CD14-positive monocyte (primary cell): ENCODE measurements at regions of chr18 and their contacts with region 1.

Region 1: DNA sequence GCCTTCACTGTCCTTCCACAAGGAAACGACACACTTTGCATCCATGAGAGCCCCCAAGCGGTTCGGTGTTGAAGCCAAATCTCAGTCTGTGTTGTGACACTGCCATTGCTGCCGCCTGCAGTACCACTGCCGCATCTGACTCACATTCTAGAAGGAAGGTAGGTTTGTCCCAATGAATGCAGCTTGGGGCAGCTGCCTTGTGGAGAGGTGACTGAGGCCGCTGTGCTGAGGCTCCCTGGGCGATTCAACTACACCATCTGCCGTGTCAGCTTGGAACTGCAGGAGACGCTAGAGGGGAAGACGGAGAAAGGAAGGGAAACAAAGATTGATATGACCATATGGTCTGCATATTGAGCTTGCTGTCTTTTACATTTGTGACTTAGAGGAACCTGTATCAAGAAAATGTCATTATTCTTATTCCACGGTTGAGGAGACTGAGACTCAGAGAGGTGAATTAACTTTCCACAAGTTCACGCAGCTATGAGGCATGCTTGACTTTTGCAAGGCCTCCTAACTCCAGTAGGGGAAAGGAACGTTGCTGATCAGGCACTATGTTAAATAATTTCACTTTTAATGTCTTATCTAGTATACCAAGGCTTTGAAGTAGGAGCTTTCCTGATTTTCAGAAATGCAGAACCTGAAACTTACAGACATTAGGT is 43.5 kb upstream of the LMAN1 start:
- DNase-seq: peak; percentile 34 to 66 (median 36)
- H3K4me3 ChIP-seq: no peak overlapping the region
- H3K4me3 Mint-ChIP-seq: no peak overlapping the region
- H3K27ac ChIP-seq: no peak overlapping the region
- H3K27ac Mint-ChIP-seq: no peak overlapping the region
- H3K4me1 ChIP-seq: no peaks in the 10 kb centered on the region
- H3K4me1 Mint-ChIP-seq: peaks cover 3% of the 10 kb centered on the region
- H3K27me3 ChIP-seq: peaks cover 0 to 2% of the 10 kb centered on the region in 2 donors
- H3K27me3 Mint-ChIP-seq: peaks cover 5 to 10% (median 5%) of the 10 kb centered on the region in 3 donors
- CTCF ChIP-seq: peak; percentile 90

Region 2: GRCh38 chr18:59249205-59249774 is 153.3 kb before region 1 on chr18:
- intact Hi-C with region 1: loop called in 1 of 2 experiments (anchors 5 kb)
- DNase-seq: no peak
- H3K4me3 ChIP-seq: no peak overlapping the region
- H3K4me3 Mint-ChIP-seq: no peak overlapping the region
- H3K27ac ChIP-seq: no peak overlapping the region
- H3K27ac Mint-ChIP-seq: no peak overlapping the region
- H3K4me1 ChIP-seq: no peaks in the 10 kb centered on the region
- H3K4me1 Mint-ChIP-seq: no peaks in the 10 kb centered on the region
- H3K27me3 ChIP-seq: peaks cover 6 to 8% of the 10 kb centered on the region in 2 donors
- H3K27me3 Mint-ChIP-seq: peaks cover 17 to 35% (median 19%) of the 10 kb centered on the region in 3 donors
- CTCF ChIP-seq: peak; percentile 34

Region 3: GRCh38 chr18:59308248-59308937 is 94.2 kb before region 1 on chr18:
- intact Hi-C with region 1: loop called (anchors 5 kb)
- DNase-seq: peak; percentile 20 to 47 (median 36)
- H3K4me3 ChIP-seq: peak overlapping the region in 1 of 3 experiments; percentile 66
- H3K4me3 Mint-ChIP-seq: peak overlapping the region; percentile 62 to 81
- H3K27ac ChIP-seq: no peak overlapping the region
- H3K27ac Mint-ChIP-seq: no peak overlapping the region
- H3K4me1 ChIP-seq: peaks cover 0 to 3% of the 10 kb centered on the region in 2 donors
- H3K4me1 Mint-ChIP-seq: peaks cover 5% of the 10 kb centered on the region
- H3K27me3 ChIP-seq: peaks cover 12 to 30% of the 10 kb centered on the region in 2 donors
- H3K27me3 Mint-ChIP-seq: peaks cover 25 to 39% (median 26%) of the 10 kb centered on the region in 3 donors
- CTCF ChIP-seq: peak; percentile 80